IMR-90 (cell line): ENCODE measurements at regions of chr17 and their contacts with region 1.

Region 1: GRCh38 chr17:36049643-36050042 is 14.4 kb upstream of the CCL18 start:
- DNase-seq: no peak
- ATAC-seq: no peak
- H3K4me3 ChIP-seq: no peak overlapping the region
- H3K27ac ChIP-seq: no peak overlapping the region
- H3K4me1 ChIP-seq: no peaks in the 10 kb centered on the region
- H3K27me3 ChIP-seq: no peaks in the 10 kb centered on the region
- CTCF ChIP-seq: no peak
- POLR2A ChIP-seq: no peak
- RAD21 ChIP-seq: no peak

Region 2: DNA sequence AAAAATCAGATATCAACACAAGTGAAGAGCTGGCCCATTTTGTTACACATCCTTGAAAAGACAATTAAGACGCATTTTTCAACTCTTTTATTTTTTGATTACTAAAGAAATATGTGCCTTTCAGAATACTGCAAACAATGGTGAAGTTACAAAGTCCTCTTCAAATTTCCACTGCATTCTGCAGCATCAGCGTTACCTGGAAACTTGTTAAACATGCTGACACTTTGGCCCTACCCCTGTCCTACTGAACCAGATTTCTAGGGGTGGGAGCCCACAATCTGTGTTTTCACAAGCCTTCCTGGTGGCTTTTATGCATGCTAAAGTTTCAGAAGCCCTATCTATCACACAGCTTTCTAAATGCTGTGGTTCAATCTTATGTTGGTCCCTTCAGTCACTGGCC is 58.6 kb before region 1 on chr17:
- CTCF ChIA-PET with region 1: no interaction called
- POLR2A ChIA-PET with region 1: no interaction called
- dilution Hi-C with region 1: no loop called
- in situ Hi-C with region 1: no loop called
- intact Hi-C with region 1: loop called (anchors 5 kb)
- DNase-seq: no peak
- ATAC-seq: no peak
- H3K4me3 ChIP-seq: no peak overlapping the region
- H3K27ac ChIP-seq: no peak overlapping the region
- H3K4me1 ChIP-seq: no peaks in the 10 kb centered on the region
- H3K27me3 ChIP-seq: no peaks in the 10 kb centered on the region
- CTCF ChIP-seq: no peak
- POLR2A ChIP-seq: no peak
- RAD21 ChIP-seq: no peak